Activated T-helper 2 cell treated with anti-CD3 and anti-CD28 coated beads, Interferon-gamma antibody, Interleukin-2, Interleukin-4, amounts not matched to agents 10 μg/mL and 5 μg/mL and 100 μg/mL, durations not matched to agents 14 hours and 24 hours and 36 hours (primary cell): ENCODE measurements at regions of chr19 and their contacts with region 1.

Region 1: GRCh38 chr19:9140159-9140874 is at the start of gene ZNF317:
- DNase-seq: peak; percentile 86
- H3K4me3 Mint-ChIP-seq: peak within 1 kb of the TSS; percentile 94
- H3K27ac Mint-ChIP-seq: peak within 1 kb of the TSS; percentile 95
- H3K4me1 Mint-ChIP-seq: peaks cover 17% of the 10 kb centered on the region
- H3K27me3 Mint-ChIP-seq: no peaks in the 10 kb centered on the region
- total RNA-seq, gene ZNF317: 44.2 and 50.0 TPM in 2 replicates

Region 2: DNA sequence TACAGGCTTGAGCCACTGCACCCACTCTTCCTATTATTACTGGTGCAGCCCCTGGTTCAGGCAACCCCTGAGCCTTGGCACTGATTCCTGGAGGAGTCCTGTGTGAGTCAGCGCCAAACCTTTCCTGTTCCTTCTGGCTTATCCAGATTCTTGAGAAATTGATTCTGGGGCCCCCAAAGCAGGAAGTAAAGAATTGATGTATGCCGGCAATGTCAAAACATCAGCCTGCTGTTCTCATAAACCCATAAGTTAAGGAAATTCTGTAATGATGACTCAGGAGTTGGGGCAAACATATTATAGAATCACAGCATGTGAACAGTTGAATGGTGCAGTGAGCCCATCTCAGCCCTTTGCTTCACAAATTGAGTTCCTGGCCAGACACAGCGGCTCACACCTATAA is 12.1 kb before region 1 on chr19:
- intact Hi-C with region 1: no loop called
- DNase-seq: no peak
- H3K4me3 Mint-ChIP-seq: no peak overlapping the region
- H3K27ac Mint-ChIP-seq: no peak overlapping the region
- H3K4me1 Mint-ChIP-seq: peaks cover 2% of the 10 kb centered on the region
- H3K27me3 Mint-ChIP-seq: no peaks in the 10 kb centered on the region

Region 3: DNA sequence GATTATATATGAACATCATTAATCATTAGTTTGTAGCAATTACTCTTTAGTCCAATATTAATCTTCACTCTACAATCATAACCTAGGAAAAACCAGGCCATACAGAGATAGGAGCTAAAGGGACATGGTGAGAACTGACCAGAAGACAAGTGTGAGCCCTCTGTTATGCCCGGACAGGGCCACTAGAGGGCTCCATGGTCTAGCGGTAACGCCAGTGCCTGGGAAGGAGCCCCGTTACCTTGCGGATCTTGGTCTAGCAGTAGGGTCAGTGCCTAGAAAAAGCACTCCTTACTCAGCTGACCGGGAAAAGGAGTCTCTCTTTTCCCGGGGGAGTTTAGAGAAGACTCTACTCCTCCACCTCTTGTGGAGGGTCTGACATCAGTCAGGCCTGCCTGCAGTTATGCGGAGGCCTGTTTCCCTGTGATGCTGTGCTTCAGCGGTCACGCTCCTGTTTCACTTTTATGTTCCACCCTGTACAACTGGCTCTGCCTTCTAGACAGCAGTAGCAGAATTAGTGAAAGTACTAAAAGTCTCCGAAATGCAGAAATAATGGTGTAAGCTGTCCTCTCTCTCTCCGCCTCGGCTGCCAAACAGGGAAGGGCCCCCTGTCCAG is 65.3 kb after region 1 on chr19:
- intact Hi-C with region 1: loop called (anchors 2 kb)
- DNase-seq: peak; percentile 51
- H3K4me3 Mint-ChIP-seq: peak overlapping the region; percentile 38
- H3K27ac Mint-ChIP-seq: no peak overlapping the region
- H3K4me1 Mint-ChIP-seq: peaks cover 2% of the 10 kb centered on the region
- H3K27me3 Mint-ChIP-seq: no peaks in the 10 kb centered on the region

Region 4: GRCh38 chr19:9309139-9309973 is 169.0 kb after region 1 on chr19 and contains the start of gene ZNF699:
- intact Hi-C with region 1: loop called (anchors 5 kb)
- DNase-seq: peak; percentile 98
- H3K4me3 Mint-ChIP-seq: peak within 1 kb of the TSS; percentile 79
- H3K27ac Mint-ChIP-seq: peak within 1 kb of the TSS; percentile 89
- H3K4me1 Mint-ChIP-seq: peaks cover 12% of the 10 kb centered on the region
- H3K27me3 Mint-ChIP-seq: no peaks in the 10 kb centered on the region
- total RNA-seq, gene ZNF699: 4.4 and 5.2 TPM in 2 replicates

Region 5: DNA sequence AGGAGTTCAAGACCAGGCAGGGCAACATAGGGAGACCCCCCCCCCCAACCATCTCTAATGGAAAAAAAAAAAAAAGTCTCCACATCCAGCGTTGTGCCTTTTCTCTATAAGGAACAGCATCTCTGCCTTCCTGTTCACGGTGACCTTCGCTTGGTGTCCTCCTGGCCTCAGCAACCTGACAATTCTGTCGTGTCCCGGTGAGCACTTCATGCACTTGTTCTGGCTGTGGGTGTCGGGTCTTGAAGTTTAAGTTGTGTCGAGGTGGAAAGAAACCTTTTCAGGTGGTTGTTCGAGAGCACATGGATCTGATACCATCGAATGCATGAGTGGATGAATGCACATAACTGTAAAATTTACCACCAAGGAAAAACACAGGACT is 184.3 kb after region 1 on chr19:
- intact Hi-C with region 1: no loop called
- DNase-seq: no peak
- H3K4me3 Mint-ChIP-seq: peak overlapping the region; percentile 86
- H3K27ac Mint-ChIP-seq: peak overlapping the region; percentile 88
- H3K4me1 Mint-ChIP-seq: peaks cover 12% of the 10 kb centered on the region
- H3K27me3 Mint-ChIP-seq: no peaks in the 10 kb centered on the region

Region 6: GRCh38 chr19:9584073-9584833 is 443.9 kb after region 1 on chr19 and contains the start of gene ZNF121:
- intact Hi-C with region 1: loop called (anchors 2 kb)
- DNase-seq: peak; percentile 77
- H3K4me3 Mint-ChIP-seq: peak within 1 kb of the TSS; percentile 91
- H3K27ac Mint-ChIP-seq: peak within 1 kb of the TSS; percentile 92
- H3K4me1 Mint-ChIP-seq: peaks cover 12% of the 10 kb centered on the region
- H3K27me3 Mint-ChIP-seq: peaks cover 2% of the 10 kb centered on the region
- total RNA-seq, gene ZNF121: 57.2 and 62.2 TPM in 2 replicates

Region 7: DNA sequence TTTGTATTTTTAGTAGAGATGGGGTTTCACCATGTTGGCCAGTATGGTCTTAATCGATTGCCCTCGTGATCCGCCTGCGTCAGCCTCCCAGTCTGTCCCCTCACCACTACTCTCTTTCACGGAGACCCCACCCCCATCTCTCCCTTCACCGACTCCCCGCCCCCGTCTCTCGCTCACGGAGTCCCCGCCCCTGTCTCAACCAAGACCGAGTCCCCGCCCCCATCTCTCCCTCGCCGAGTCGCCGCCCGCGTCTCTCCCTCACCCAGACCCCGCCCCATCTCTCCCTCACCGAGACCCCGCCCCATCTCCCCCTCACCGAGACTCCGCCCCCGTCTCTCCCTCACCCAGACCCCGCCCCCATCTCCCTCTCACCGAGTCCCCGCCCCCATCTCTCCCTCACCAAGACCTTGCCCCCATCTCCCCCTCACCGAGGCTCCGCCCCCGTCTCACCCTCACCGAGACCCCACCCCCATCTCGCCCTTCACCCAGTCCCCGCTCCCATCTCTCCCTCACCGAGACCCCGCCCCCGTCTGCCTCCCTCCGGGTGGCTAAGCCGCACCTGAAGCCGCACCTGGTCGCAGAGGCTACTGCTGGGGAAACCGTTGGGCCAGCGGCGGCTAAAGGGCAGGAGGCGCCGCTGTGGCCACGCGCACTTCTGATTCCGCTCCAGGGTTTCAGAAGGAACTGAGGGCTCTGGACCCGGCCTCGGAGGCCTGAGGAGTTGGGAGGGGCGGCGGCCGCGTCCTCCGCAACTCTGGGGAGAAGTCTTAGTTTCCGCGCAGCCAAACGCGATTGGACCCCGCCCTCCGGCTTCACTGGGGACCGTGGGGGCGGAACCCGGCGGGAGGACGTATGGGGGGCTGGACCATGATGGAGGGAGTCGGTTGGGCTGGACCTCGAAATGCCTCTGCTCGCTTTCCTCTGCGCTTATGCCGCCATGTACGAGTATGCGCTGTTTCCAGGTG is 645.3 kb after region 1 on chr19:
- intact Hi-C with region 1: loop called (anchors 1 kb)
- DNase-seq: peak; percentile 92
- H3K4me3 Mint-ChIP-seq: peak overlapping the region; percentile 88
- H3K27ac Mint-ChIP-seq: peak overlapping the region; percentile 86
- H3K4me1 Mint-ChIP-seq: peaks cover 22% of the 10 kb centered on the region
- H3K27me3 Mint-ChIP-seq: no peaks in the 10 kb centered on the region